AG04450 (cell line): ENCODE measurements at regions of chr4 and their contacts with region 1.

Region 1: DNA sequence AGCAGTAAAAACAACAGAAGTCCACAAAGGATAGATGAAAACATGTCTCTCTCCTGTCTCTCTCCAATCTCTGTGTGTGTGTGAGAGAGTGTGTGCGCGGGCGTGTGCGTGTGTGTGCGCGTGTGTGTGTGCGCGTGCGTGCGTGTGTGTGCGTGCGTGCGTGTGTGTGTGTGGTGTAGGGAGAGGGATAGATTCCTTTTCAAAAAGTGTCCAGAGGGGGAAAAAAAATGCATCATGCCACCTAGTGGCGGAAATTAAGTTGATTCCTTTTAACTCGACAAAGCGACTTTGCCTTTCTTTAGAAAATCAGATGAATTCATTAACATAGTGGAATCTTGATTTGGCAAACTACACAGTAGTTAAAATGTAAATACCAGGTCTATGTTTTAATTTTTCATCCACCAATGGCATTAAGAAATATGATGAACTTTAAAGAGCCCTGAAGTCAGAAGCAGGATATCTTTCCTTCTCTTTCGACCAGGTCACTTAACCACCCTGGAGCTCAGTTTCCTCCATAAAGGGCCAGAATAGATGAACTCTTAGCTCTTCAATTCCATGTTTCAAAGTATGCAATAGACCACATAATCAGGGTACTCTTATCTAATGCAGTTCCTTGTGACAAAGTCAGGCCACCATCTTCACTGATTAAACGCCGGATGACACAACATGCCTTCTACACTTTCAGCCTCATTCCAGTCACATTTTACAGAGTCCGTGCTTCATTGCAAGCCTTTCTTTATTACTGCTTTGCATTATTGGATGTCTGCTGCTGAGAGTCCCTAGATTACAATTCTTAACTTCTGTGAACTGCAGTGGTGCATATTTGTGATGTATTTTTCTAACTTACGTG is 162.8 kb downstream of the FBXO8 start:
- DNase-seq: peak; percentile 27
- H3K4me3 ChIP-seq: peak overlapping the region; percentile 56
- H3K27ac ChIP-seq: no peak overlapping the region
- H3K27me3 ChIP-seq: no peaks in the 10 kb centered on the region
- CTCF ChIP-seq: peak; percentile 55

Region 2: DNA sequence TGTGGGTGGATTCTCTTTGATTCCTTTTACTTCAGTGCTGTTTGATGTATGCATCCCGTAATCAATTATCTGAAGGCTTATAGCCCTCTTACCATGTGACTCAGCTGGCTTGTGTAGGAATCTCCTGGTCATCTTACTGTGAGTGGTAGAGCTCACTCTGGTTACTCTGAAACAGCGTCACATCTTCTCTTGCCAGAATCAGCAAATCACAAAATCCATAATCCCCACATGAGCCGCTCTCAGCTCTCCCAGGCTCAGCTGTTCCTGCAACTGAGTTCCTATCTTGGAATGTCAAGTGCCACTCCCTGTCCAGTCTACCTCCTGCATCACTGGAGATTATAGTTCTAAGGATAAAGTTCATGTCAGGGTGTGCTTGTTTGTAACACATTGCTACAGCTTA is 115.2 kb before region 1 on chr4:
- CTCF ChIA-PET with region 1: no interaction called
- POLR2A ChIA-PET with region 1: no interaction called
- DNase-seq: no peak
- H3K4me3 ChIP-seq: no peak overlapping the region
- H3K27ac ChIP-seq: no peak overlapping the region
- H3K27me3 ChIP-seq: no peaks in the 10 kb centered on the region
- CTCF ChIP-seq: no peak

Region 3: DNA sequence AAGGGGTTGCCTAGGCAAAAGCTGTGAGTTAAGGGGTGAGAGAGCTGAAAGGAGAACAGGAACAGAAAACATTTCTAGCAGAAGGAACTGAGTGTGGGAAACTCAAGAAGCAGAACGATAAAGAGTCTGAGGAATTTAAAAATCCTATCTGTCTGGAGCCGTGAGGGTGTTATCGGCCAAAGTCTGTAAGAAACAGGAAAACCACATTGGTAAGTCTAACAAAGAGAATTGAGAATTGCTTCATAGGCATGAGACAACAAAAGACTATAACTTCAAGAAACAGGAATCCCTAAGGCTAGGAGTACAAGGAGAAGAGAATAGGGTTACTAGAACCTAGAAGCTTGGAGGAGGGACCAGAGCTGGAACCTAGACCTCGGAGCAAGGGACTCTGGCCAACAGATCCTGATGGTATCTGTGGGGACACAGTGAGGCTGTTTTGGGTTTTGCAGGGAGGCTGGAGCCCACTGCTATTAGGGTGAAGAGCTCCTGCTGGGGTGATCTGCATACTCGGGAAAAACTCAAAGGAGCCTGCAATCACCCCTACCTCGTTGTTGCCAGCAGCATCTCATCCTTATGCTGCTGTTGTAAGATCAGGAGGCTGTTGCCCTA is 12.8 kb before region 1 on chr4:
- CTCF ChIA-PET with region 1: interaction called, 16 read pairs
- POLR2A ChIA-PET with region 1: no interaction called
- DNase-seq: no peak
- H3K4me3 ChIP-seq: no peak overlapping the region
- H3K27ac ChIP-seq: no peak overlapping the region
- H3K27me3 ChIP-seq: no peaks in the 10 kb centered on the region
- CTCF ChIP-seq: no peak